ENCODE measurements at regions of chr6 and their contacts with region 1.

Region 1: DNA sequence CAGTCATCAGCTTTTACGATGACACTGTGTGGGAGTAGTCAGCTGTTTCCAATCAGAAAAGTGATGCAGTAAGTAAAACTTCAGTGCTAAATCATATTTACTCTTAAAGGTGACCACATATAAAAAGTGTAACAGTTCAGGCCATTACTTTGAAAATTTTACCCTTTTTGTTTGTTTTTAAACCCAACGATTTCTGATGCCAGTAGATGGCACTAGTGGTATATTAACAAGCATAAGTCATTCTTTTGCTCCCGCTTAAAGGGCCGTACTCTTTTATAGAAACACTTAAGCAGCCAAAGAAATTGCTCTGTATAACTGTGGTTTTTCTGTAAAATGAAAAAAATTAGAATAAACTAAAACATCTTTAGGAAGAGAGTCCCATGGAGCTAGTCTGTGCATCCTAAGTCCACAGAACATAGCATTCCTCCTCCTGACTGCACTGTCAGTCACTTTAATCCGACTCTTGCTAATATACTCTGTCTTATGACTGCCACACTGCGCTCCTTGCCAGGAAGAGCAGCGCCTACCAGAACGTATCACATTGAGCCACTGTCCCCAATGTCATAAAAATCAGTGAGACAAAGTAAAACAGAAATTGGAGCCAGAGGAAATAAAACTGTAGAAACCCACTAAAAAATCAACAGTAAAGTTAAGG is 25.0 kb downstream of the HEBP2 start:
- DNase-seq: no peak
- ATAC-seq: no peak
- H3K4me3 ChIP-seq: no peak overlapping the region
- H3K27ac ChIP-seq: no peak overlapping the region
- H3K4me1 ChIP-seq: peaks cover 0 to 5% of the 10 kb centered on the region in 2 donors
- H3K27me3 ChIP-seq: no peaks in the 10 kb centered on the region
- CTCF ChIP-seq: peak in 4 of 5 experiments; percentile 26 to 51 (median 38)
- POLR2A ChIP-seq: no peak

Region 2: DNA sequence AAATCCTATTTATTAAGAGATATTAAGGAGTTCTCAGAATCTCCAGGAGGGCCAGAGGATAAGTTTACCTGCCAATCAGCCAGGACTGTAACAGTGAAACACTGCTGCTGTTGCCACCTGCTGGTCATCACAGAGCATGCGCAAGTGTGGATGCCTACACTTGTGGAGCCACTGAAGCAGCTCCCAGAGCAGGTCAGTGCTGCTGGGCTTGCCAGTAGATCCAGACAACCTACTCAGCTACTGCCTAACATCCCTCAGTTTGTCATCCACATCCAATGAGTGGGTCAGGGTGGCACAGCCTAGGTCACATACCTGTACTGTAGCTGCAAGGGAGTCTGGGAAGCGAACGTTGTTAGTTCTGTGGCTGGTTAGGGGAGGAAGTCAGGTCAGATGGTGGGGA is 88.6 kb after region 1 on chr6:
- in situ Hi-C with region 1: loop called in 1 of 4 experiments (anchors 10 kb)
- intact Hi-C with region 1: loop called (anchors 10 kb)
- DNase-seq: no peak
- ATAC-seq: no peak
- H3K4me3 ChIP-seq: no peak overlapping the region
- H3K27ac ChIP-seq: no peak overlapping the region
- H3K4me1 ChIP-seq: no peaks in the 10 kb centered on the region
- H3K27me3 ChIP-seq: no peaks in the 10 kb centered on the region
- CTCF ChIP-seq: peak in 3 of 5 experiments; percentile 30 to 48 (median 41)
- POLR2A ChIP-seq: no peak

Region 3: DNA sequence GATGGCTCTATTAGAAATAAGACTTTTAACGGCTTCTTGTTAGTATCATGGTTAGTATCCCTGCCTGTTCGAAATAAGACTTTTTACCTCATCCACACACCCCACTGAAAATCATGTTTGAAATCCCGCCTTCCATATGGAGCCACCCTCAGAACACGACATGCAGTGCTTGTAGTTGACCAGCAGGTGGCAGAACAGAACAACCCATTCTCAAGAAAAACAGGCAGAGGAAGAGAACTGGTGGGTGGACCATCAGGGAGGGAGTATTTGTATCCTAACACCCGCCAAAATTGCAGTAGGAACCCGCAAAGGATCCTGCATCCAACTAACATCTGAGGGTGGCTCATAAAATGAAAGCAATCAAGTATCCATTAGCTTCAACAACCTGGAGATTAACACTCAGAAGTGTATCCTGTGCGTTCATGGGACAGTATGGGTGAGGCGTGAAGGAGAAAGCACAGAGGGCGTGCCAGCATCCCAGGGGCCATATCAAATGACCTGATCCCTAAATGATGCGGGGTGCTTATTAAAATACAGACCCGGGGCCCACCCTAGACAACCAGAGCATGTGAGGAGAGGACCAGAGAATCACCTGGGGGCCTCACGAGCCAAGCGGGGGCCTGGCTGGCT is 159.8 kb after region 1 on chr6:
- in situ Hi-C with region 1: loop called in 3 of 4 experiments (anchors 5 to 10 kb)
- intact Hi-C with region 1: loop called (anchors 1 kb)
- DNase-seq: peak in 1 of 2 donors; percentile 12
- ATAC-seq: peak; percentile 43 to 63
- H3K4me3 ChIP-seq: no peak overlapping the region
- H3K27ac ChIP-seq: no peak overlapping the region
- H3K4me1 ChIP-seq: peaks cover 0 to 12% of the 10 kb centered on the region in 2 donors
- H3K27me3 ChIP-seq: no peaks in the 10 kb centered on the region
- CTCF ChIP-seq: peak; percentile 82 to 88 (median 83)
- POLR2A ChIP-seq: no peak

Region 4: DNA sequence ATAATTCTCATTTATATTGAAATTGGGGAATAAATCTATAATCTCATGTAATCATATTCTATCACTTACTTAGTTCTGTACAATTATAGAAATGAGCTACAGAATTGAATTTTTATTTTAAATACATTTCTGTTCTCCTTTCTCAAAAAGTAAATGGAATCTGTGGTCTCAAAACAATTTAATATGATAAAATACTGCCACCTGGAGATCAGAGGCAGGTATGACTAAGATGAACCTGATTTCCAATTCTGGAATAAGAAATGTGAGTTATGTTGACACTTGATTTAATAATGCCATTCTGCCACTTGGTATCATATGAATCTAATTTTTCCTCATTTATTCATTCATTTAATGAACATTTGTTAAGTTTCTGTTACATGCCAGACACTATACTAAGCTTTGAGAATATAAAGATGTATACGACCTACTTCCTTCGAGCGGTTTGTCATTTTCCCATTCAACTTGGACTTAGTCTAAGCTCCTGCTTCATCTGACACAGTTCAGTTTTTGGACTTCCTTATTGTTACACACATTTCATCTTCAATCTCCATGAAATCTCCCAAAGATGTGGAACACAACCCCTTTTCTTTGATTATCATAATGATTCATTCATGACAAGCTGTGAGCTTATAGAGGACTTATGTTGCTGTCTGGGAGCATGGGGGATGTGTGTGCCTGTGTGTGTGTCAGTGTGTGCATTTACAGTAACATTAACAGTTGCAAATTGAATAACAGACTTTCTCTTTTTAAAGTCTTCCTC is 337.0 kb after region 1 on chr6:
- in situ Hi-C with region 1: loop called in 3 of 4 experiments (anchors 10 to 25 kb)
- intact Hi-C with region 1: loop called (anchors 2 kb)
- DNase-seq: no peak
- ATAC-seq: no peak
- H3K4me3 ChIP-seq: no peak overlapping the region
- H3K27ac ChIP-seq: no peak overlapping the region
- H3K4me1 ChIP-seq: no peaks in the 10 kb centered on the region
- H3K27me3 ChIP-seq: no peaks in the 10 kb centered on the region
- CTCF ChIP-seq: peak; percentile 34 to 74 (median 62)
- POLR2A ChIP-seq: no peak

Measured in gastrocnemius medialis (tissue), 4 donors.